Caco-2 (cell line): ENCODE measurements at regions of chr10 and their contacts with region 1.

Region 1: GRCh38 chr10:25080880-25081581 is 64.6 kb downstream of the THNSL1 start:
- DNase-seq: peak; percentile 92 to 94
- H3K4me3 ChIP-seq: no peak overlapping the region
- H3K4me3 Mint-ChIP-seq: peak overlapping the region; percentile 26
- H3K27ac Mint-ChIP-seq: peak overlapping the region; percentile 42
- H3K4me1 ChIP-seq: peaks cover 64% of the 10 kb centered on the region
- H3K4me1 Mint-ChIP-seq: peaks cover 51% of the 10 kb centered on the region
- H3K27me3 ChIP-seq: no peaks in the 10 kb centered on the region
- H3K27me3 Mint-ChIP-seq: no peaks in the 10 kb centered on the region
- CTCF ChIP-seq: peak; percentile 98 to 99

Region 2: DNA sequence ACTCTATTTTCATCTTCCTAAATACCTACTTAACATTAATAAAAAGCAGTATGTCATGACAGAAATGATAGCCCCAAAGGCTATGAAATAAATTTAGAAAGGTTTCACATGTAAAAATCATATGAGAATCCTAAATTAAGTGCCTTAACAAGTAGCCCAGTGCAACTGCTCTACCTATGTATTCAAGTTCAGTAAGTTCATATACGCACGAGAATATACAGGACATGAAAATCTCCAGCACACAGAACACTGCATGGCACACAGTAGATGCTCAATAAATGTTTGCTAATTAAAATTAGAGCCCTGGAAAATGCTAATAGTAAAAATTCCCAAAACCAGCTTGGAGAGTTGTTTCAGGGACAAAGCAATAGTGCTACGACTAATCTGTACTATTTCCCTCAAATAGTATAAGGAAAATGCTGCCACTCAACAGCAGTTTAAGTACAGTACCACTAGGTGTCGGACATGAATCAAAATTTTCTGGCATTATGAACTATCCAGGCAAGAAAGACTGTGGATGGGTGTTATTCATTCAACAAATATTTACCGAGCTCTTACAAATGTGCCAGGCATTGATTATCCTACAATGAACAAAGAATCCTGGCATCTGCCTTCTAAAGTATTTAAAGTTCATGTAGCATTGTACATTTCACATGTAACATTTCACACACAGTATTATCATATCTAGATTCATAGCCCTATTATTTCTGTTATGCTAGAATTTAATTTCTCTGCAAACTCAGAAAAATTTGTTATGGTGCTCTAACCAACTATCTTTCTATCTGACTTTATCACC is 438.2 kb before region 1 on chr10:
- CTCF ChIA-PET with region 1: interaction called, 7 read pairs
- POLR2A ChIA-PET with region 1: no interaction called
- intact Hi-C with region 1: loop called (anchors 1 kb)
- DNase-seq: peak in 1 of 2 experiments; percentile 76
- H3K4me3 ChIP-seq: no peak overlapping the region
- H3K4me3 Mint-ChIP-seq: no peak overlapping the region
- H3K27ac Mint-ChIP-seq: no peak overlapping the region
- H3K4me1 ChIP-seq: peaks cover 5% of the 10 kb centered on the region
- H3K4me1 Mint-ChIP-seq: no peaks in the 10 kb centered on the region
- H3K27me3 ChIP-seq: no peaks in the 10 kb centered on the region
- H3K27me3 Mint-ChIP-seq: no peaks in the 10 kb centered on the region
- CTCF ChIP-seq: peak; percentile 85 to 89

Region 3: DNA sequence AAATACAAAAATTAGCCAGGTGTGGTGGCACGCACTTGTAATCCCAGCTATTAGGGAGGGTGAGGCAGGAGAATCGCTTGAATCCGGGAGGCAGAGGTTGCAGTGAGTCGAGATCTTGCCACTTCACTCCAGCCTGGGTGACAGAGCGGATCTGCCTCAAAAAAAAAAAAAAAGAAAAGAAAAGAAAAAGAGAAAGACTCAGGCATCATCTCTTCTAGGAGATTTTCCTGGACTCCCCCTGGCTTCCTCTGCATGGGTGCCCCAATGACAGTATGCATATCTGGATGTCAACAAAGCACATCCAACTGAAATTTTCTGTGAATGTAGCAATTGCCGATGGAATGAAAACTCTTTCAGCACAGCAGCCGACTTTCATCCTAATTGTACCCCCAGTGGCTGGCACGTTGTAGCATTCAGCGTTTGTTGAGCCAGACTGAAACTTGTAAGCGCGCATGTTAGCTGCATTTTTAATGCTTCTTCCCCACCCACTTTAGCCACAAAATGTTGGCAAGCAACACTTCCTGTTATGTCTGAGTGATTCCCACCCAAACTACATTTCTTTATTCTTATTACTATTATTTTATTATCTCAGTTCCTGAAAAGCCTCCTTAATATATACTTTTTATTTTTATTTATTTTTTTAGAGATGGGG is 198.9 kb before region 1 on chr10:
- CTCF ChIA-PET with region 1: no interaction called
- POLR2A ChIA-PET with region 1: no interaction called
- intact Hi-C with region 1: loop called (anchors 10 kb)
- DNase-seq: no peak
- H3K4me3 ChIP-seq: no peak overlapping the region
- H3K4me3 Mint-ChIP-seq: no peak overlapping the region
- H3K27ac Mint-ChIP-seq: no peak overlapping the region
- H3K4me1 ChIP-seq: peaks cover 10% of the 10 kb centered on the region
- H3K4me1 Mint-ChIP-seq: no peaks in the 10 kb centered on the region
- H3K27me3 ChIP-seq: no peaks in the 10 kb centered on the region
- H3K27me3 Mint-ChIP-seq: no peaks in the 10 kb centered on the region
- CTCF ChIP-seq: no peak

Region 4: GRCh38 chr10:24989867-24990266 is 91.2 kb before region 1 on chr10:
- CTCF ChIA-PET with region 1: interaction called, 6 read pairs
- POLR2A ChIA-PET with region 1: no interaction called
- intact Hi-C with region 1: loop called (anchors 1 kb)
- DNase-seq: no peak
- H3K4me3 ChIP-seq: no peak overlapping the region
- H3K4me3 Mint-ChIP-seq: no peak overlapping the region
- H3K27ac Mint-ChIP-seq: no peak overlapping the region
- H3K4me1 ChIP-seq: no peaks in the 10 kb centered on the region
- H3K4me1 Mint-ChIP-seq: no peaks in the 10 kb centered on the region
- H3K27me3 ChIP-seq: no peaks in the 10 kb centered on the region
- H3K27me3 Mint-ChIP-seq: no peaks in the 10 kb centered on the region
- CTCF ChIP-seq: peak in 1 of 2 experiments; percentile 17

Region 5: GRCh38 chr10:25036381-25036780 is 44.6 kb before region 1 on chr10:
- CTCF ChIA-PET with region 1: interaction called, 3 read pairs
- POLR2A ChIA-PET with region 1: no interaction called
- intact Hi-C with region 1: loop called (anchors 1 kb)
- DNase-seq: no peak
- H3K4me3 ChIP-seq: no peak overlapping the region
- H3K4me3 Mint-ChIP-seq: no peak overlapping the region
- H3K27ac Mint-ChIP-seq: no peak overlapping the region
- H3K4me1 ChIP-seq: peaks cover 24% of the 10 kb centered on the region
- H3K4me1 Mint-ChIP-seq: peaks cover 33% of the 10 kb centered on the region
- H3K27me3 ChIP-seq: no peaks in the 10 kb centered on the region
- H3K27me3 Mint-ChIP-seq: no peaks in the 10 kb centered on the region
- CTCF ChIP-seq: no peak

Region 6: GRCh38 chr10:25226775-25227682 is 146.0 kb after region 1 on chr10:
- CTCF ChIA-PET with region 1: interaction called, 3 read pairs
- POLR2A ChIA-PET with region 1: no interaction called
- intact Hi-C with region 1: loop called (anchors 1 kb)
- DNase-seq: peak; percentile 57 to 71
- H3K4me3 ChIP-seq: no peak overlapping the region
- H3K4me3 Mint-ChIP-seq: no peak overlapping the region
- H3K27ac Mint-ChIP-seq: no peak overlapping the region
- H3K4me1 ChIP-seq: no peaks in the 10 kb centered on the region
- H3K4me1 Mint-ChIP-seq: no peaks in the 10 kb centered on the region
- H3K27me3 ChIP-seq: no peaks in the 10 kb centered on the region
- H3K27me3 Mint-ChIP-seq: peaks cover 7% of the 10 kb centered on the region
- CTCF ChIP-seq: peak; percentile 90 to 91